Common myeloid progenitor, CD34-positive (primary cell): ENCODE measurements at regions of chr17 and their contacts with region 1.

Region 1: DNA sequence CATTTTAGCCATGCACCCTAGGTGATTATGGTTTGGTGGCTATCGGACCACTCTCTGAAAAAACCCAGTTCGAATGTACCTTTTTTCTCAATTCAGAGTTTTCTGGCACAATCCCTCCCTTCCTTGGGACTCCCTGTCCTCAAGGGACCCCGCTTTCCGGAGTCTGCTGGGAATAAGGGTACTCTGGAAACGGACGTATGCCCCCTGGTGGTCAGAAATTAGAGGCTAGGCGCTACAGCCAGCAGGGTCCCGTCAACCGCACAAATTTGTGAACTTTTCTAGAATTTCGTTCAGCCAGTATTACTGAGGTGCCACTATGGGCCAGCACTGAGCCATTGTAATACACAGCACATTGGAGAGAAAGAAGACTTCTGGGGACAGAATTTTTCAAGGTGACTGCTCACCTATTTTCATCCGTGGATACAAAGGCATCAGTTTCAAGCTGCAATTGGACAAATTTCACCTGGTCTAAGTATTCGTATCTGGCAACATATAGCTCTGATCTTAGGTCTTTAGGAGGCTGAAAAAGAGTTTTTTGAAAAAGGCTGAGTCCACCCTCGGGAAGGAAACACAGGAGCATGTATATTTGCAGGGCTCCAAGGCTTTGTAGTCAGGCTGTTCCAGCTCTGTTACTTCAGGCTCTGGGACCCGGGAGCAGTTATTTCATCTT is 27.1 kb upstream of the CRYBA1 start:
- DNase-seq: peak; percentile 80 to 90 (median 84)
- H3K4me3 ChIP-seq: peak overlapping the region in 1 of 7 experiments; percentile 3
- H3K27ac ChIP-seq: no peak overlapping the region
- H3K4me1 ChIP-seq: peaks cover 0 to 8% (median 5%) of the 10 kb centered on the region in 4 experiments
- H3K27me3 ChIP-seq: no peaks in the 10 kb centered on the region

Region 2: DNA sequence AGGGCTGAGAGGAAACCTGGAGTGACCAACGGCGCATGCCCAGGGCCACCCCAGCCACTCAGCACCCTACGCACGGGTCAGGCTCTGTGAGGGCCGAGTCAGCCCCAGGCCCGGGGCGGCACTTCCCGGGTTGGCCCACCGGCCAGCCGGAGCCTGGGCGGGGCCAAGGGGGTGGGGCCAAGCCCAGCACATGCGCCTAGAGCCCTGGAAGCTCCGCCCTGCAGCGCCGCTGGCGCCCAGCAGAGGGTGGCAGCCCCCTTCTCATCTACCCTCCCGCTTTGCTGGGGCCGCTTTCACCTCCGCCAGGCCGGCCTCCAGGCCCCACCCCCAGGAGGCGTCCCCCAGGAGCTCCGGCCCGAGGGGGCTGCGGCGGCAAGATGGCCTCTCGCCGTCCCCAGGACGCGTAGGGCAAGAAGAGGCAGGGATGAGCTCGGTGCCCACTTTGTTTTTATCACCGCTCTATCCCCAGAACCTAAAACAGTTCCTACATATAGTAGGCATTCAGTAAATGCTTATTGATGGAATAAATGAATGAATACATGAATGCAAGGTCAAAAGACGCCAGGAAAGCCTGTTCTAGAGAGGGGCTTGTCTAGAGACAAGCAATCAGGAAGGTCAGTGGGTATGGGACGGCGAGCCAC is 70.6 kb before region 1 on chr17:
- CTCF ChIA-PET with region 1: interaction called, 124 read pairs
- POLR2A ChIA-PET with region 1: interaction called, 4 read pairs
- DNase-seq: peak; percentile 85 to 87 (median 86)
- H3K4me3 ChIP-seq: peak overlapping the region; percentile 31 to 82 (median 61)
- H3K27ac ChIP-seq: peak overlapping the region; percentile 59 to 82
- H3K4me1 ChIP-seq: peaks cover 15 to 61% (median 45%) of the 10 kb centered on the region in 4 experiments
- H3K27me3 ChIP-seq: no peaks in the 10 kb centered on the region

Region 3: GRCh38 chr17:29190039-29190438 is 29.5 kb before region 1 on chr17:
- CTCF ChIA-PET with region 1: interaction called, 21 read pairs
- POLR2A ChIA-PET with region 1: no interaction called
- DNase-seq: no peak
- H3K4me3 ChIP-seq: no peak overlapping the region
- H3K27ac ChIP-seq: no peak overlapping the region
- H3K4me1 ChIP-seq: peaks cover 0 to 16% (median 2%) of the 10 kb centered on the region in 4 experiments
- H3K27me3 ChIP-seq: no peaks in the 10 kb centered on the region

Region 4: GRCh38 chr17:29233301-29233700 is 13.8 kb after region 1 on chr17:
- CTCF ChIA-PET with region 1: interaction called, 17 read pairs
- POLR2A ChIA-PET with region 1: no interaction called
- DNase-seq: no peak
- H3K4me3 ChIP-seq: no peak overlapping the region
- H3K27ac ChIP-seq: no peak overlapping the region
- H3K4me1 ChIP-seq: peaks cover 0 to 15% (median 3%) of the 10 kb centered on the region in 4 experiments
- H3K27me3 ChIP-seq: no peaks in the 10 kb centered on the region